ENCODE measurements at regions of chr6 and their contacts with region 1.

Region 1: DNA sequence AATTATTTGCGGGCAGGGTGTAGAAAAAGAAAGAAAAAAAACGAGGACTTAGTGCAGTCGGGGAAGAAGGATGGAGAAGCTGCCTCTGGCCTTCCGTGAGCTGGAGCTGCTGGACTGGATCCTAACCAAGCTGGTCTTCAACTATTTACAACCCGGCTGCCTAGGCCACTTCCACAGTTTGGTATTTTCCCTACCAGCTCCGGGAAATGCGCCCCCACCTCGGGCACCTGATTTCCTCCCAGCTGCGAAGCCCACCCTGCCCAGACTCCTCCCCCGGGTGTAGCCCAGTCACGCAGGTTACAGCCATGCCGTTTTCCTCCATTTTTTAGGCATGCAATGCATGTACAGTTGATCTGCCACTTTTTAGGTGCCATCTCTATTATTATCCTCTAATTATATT is 21.2 kb downstream of the THEMIS start:
- DNase-seq: peak; percentile 30
- H3K4me3 Mint-ChIP-seq: peak overlapping the region; percentile 52
- H3K27ac Mint-ChIP-seq: no peak overlapping the region
- H3K4me1 Mint-ChIP-seq: peaks cover 68% of the 10 kb centered on the region
- H3K27me3 Mint-ChIP-seq: no peaks in the 10 kb centered on the region

Region 2: DNA sequence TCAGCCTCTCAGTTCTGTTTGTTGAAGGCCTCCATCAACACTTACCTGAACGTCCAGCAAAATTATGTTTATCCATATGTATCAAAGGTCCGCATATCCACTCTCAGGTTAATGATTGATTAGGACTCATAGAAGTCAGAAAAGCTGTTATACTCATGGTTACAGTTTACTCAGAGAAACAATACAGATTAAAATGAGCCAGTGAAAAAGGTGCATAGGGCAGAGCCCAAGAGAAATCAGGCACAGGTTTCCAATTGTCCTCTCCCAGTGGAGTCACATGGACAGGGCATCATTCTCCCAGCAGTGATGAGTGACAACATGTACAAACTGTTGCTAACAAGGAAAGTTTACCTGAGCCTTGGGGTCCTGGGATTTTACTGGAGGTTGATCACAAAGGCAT is 15.0 kb before region 1 on chr6:
- CTCF ChIA-PET with region 1: interaction called, 5 read pairs
- POLR2A ChIA-PET with region 1: no interaction called
- intact Hi-C with region 1: loop called (anchors 2 kb)
- DNase-seq: no peak
- H3K4me3 Mint-ChIP-seq: no peak overlapping the region
- H3K27ac Mint-ChIP-seq: no peak overlapping the region
- H3K4me1 Mint-ChIP-seq: peaks cover 56% of the 10 kb centered on the region
- H3K27me3 Mint-ChIP-seq: no peaks in the 10 kb centered on the region

Region 3: GRCh38 chr6:127893541-127893940 is 13.9 kb after region 1 on chr6:
- CTCF ChIA-PET with region 1: interaction called, 4 read pairs
- POLR2A ChIA-PET with region 1: interaction called, 4 read pairs
- intact Hi-C with region 1: loop called (anchors 1 kb)
- DNase-seq: peak; percentile 51
- H3K4me3 Mint-ChIP-seq: peak overlapping the region; percentile 73
- H3K27ac Mint-ChIP-seq: peak overlapping the region; percentile 84
- H3K4me1 Mint-ChIP-seq: peaks cover 52% of the 10 kb centered on the region
- H3K27me3 Mint-ChIP-seq: no peaks in the 10 kb centered on the region

Region 4: GRCh38 chr6:127900935-127901334 is 21.2 kb after region 1 on chr6 and contains the start of gene THEMIS:
- CTCF ChIA-PET with region 1: no interaction called
- POLR2A ChIA-PET with region 1: interaction called, 4 read pairs
- intact Hi-C with region 1: loop called (anchors 1 kb)
- DNase-seq: peak; percentile 50
- H3K4me3 Mint-ChIP-seq: peak within 1 kb of the TSS; percentile 89
- H3K27ac Mint-ChIP-seq: peak within 1 kb of the TSS; percentile 93
- H3K4me1 Mint-ChIP-seq: peaks cover 64% of the 10 kb centered on the region
- H3K27me3 Mint-ChIP-seq: no peaks in the 10 kb centered on the region
- total RNA-seq, gene THEMIS: 9.5 to 11.5 TPM

Region 5: DNA sequence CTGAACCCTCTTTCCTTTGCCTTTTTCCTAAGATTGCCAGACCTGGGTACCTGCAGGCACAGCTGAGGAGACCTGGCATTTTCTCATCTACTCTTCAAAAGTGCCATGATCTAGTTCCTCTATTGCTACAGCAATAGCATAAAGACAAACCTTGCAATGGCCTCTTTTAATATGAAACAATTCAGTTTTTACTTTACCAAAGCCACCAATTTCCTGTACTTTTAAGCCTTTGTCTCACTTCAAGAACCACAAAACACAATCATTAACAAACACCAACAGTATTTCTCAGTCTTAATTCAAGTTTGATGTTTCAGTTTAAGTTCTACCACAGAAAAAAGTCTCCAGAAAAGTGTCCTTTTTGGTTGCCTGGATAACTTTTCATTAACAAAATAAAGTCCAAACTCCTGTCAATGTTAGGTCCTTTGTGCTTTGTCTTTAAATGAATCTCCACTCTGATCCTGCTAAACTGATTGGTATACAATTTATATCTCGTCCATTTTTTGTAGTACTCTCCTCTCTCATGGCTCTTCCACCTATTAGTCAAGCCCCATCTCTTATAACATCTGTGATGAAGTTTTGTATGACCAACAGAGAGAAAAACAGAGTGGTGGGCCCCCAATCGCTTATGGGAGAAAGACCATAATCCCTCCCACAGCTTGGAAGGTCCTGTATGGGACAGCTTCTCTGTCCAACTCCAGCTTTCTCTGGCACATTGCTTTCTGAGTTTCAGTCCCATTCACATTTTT is 71.7 kb after region 1 on chr6:
- CTCF ChIA-PET with region 1: no interaction called
- POLR2A ChIA-PET with region 1: no interaction called
- intact Hi-C with region 1: loop called (anchors 2 kb)
- DNase-seq: no peak
- H3K4me3 Mint-ChIP-seq: peak overlapping the region; percentile 43
- H3K27ac Mint-ChIP-seq: peak overlapping the region; percentile 55
- H3K4me1 Mint-ChIP-seq: peaks cover 48% of the 10 kb centered on the region
- H3K27me3 Mint-ChIP-seq: no peaks in the 10 kb centered on the region